ENCODE measurements at regions of chr3 and their contacts with region 1.

Region 1: DNA sequence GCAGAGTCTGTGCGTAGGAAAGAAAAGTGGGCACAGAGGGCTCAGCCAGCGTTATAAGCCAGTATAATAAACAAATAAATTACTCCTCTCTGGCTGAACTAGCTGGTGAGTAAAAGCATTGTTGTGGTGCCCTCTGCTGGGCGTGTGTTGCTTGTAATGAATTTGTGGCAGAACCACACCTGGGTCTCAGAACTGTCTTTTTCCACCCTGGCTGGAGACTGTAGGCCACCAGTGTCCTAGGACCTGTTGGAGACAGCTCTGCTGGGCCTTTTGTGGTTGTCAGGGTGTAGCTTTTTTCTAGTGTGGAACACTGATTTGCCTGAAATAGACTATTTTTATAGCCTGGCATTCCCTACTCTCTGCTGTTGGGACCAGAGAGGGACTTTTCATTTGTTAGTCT is 130.5 kb upstream of the EIF1B start:
- DNase-seq: peak; percentile 61 to 62
- ATAC-seq: peak in 7 of 8 donors; percentile 62 to 72 (median 65)
- H3K4me3 ChIP-seq: no peak overlapping the region
- H3K27ac ChIP-seq: no peak overlapping the region
- H3K4me1 ChIP-seq: peaks cover 0 to 7% (median 0%) of the 10 kb centered on the region in 9 donors
- H3K27me3 ChIP-seq: no peaks in the 10 kb centered on the region
- CTCF ChIP-seq: peak; percentile 55 to 86 (median 79)

Region 2: DNA sequence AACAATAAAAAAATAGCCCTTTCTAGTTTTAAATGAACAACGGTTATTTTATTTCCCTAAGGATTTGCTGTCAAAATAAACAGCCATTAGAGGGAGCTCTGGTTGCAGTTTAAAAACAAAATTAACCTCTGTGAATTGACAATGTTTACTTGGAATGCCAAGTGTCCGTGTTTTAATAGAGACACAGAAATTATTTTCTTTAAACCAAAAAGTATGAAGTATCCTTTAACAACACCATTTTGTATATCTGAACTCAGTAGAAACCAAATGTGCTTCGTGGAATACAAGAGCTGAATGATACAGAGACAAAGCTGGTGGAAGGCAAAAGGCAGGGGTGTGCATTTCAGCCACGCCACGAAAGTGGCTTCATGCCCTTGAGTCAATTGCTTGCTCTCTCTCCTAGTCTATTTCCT is 637.1 kb before region 1 on chr3:
- intact Hi-C with region 1: loop called in 8 of 10 experiments (anchors 2 to 10 kb)
- DNase-seq: no peak
- ATAC-seq: no peak
- H3K4me3 ChIP-seq: peak overlapping the region in 3 of 10 donors; percentile 6 to 29 (median 28)
- H3K27ac ChIP-seq: no peak overlapping the region
- H3K4me1 ChIP-seq: peaks cover 0 to 4% (median 0%) of the 10 kb centered on the region in 9 donors
- H3K27me3 ChIP-seq: peaks cover 0 to 6% (median 0%) of the 10 kb centered on the region in 7 donors
- CTCF ChIP-seq: peak in 8 of 9 donors; percentile 13 to 71 (median 54)

Region 3: GRCh38 chr3:39671116-39671515 is 507.9 kb before region 1 on chr3:
- intact Hi-C with region 1: loop called in 1 of 10 experiments (anchors 5 kb)
- DNase-seq: no peak
- ATAC-seq: no peak
- H3K4me3 ChIP-seq: no peak overlapping the region
- H3K27ac ChIP-seq: no peak overlapping the region
- H3K4me1 ChIP-seq: no peaks in the 10 kb centered on the region
- H3K27me3 ChIP-seq: peaks cover 0 to 26% (median 3%) of the 10 kb centered on the region in 7 donors
- CTCF ChIP-seq: no peak

Region 4: GRCh38 chr3:39707314-39707909 is 471.6 kb before region 1 on chr3:
- intact Hi-C with region 1: loop called in 8 of 10 experiments (anchors 2 to 5 kb)
- DNase-seq: no peak
- ATAC-seq: peak in 1 of 8 donors; percentile 39
- H3K4me3 ChIP-seq: no peak overlapping the region
- H3K27ac ChIP-seq: no peak overlapping the region
- H3K4me1 ChIP-seq: no peaks in the 10 kb centered on the region
- H3K27me3 ChIP-seq: no peaks in the 10 kb centered on the region
- CTCF ChIP-seq: peak; percentile 32 to 78 (median 72)

Region 5: DNA sequence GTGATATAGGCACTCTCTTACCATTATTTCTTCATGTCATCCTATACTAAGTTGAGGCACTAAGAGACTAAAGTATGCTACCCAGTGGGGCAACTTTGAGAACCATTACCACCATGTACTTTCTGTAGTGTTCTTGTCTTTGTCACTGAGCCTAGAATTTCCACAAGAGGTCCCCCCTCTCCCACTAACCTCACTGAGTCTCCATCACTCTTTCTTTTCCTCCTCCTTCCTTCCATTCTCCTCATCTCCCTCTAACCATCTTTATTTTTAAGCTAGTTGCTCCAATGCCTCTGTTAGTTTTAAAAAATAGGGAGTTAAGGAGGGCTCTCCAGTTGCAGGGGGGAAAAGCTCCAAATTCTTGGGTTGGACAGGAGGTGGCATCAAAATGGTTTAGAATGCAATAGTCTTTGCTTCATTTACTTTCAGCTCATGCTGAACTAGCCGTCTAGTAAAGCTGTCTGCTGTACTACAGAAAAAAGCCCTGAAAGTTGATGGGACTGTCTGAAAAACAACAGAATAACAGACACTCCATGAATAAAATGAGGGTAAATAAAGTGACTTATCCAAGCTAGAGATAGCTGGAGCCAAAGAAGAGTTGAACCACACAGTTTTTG is 454.7 kb before region 1 on chr3:
- intact Hi-C with region 1: loop called in 9 of 10 experiments (anchors 1 to 5 kb)
- DNase-seq: no peak
- ATAC-seq: peak in 1 of 8 donors; percentile 37
- H3K4me3 ChIP-seq: no peak overlapping the region
- H3K27ac ChIP-seq: no peak overlapping the region
- H3K4me1 ChIP-seq: no peaks in the 10 kb centered on the region
- H3K27me3 ChIP-seq: no peaks in the 10 kb centered on the region
- CTCF ChIP-seq: peak in 8 of 9 donors; percentile 15 to 55 (median 48)

Region 6: GRCh38 chr3:39812537-39812936 is 366.5 kb before region 1 on chr3:
- intact Hi-C with region 1: loop called in 3 of 10 experiments (anchors 5 to 10 kb)
- DNase-seq: no peak
- ATAC-seq: no peak
- H3K4me3 ChIP-seq: no peak overlapping the region
- H3K27ac ChIP-seq: no peak overlapping the region
- H3K4me1 ChIP-seq: peaks cover 6 to 23% (median 15%) of the 10 kb centered on the region in 9 donors
- H3K27me3 ChIP-seq: peaks cover 0 to 61% (median 37%) of the 10 kb centered on the region in 7 donors
- CTCF ChIP-seq: peak in 7 of 9 donors; percentile 35 to 55 (median 40)

Region 7: GRCh38 chr3:40487172-40487571 is 308.2 kb after region 1 on chr3:
- intact Hi-C with region 1: no loop called
- DNase-seq: no peak
- ATAC-seq: no peak
- H3K4me3 ChIP-seq: no peak overlapping the region
- H3K27ac ChIP-seq: no peak overlapping the region
- H3K4me1 ChIP-seq: no peaks in the 10 kb centered on the region
- H3K27me3 ChIP-seq: no peaks in the 10 kb centered on the region
- CTCF ChIP-seq: no peak

Measured in heart right ventricle (tissue), 16 donors.